Pancreas (tissue), 10 donors: ENCODE measurements at regions of chr1 and their contacts with region 1.

Region 1: DNA sequence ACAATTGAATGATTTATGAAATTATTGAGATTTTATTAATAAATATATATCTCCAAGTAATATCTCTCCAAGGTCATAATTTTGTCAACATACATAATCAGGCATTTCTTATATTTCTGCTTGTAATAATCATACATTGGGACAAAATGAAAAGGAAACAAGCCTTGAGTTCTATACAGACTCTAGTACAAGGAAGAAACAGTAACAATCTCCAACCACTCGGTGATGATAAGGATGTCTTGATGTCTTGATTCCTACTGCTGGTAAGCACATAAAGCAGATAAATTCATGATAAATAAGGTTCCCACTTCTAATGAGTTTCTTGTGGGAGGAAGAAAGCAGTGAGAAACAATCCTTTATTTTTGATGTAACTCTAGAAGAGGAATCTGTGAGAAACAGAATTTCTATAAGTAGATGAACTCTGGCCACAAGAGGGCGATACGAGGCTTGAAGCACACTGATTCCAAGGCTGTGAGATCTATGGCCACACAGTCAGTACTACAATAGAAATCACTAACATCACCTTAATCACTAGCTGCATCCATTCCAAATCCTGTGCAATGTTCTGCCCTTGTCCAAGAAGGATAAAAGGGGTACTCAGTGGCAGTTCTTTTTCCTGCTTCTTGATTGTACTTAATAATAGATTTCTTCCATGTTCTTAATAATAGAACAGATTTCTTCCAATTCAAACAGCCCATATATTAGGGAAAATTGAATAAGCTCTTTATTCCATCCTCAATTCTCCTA is 41.4 kb upstream of the LRRC8B start:
- DNase-seq: peak in 5 of 6 donors; percentile 37 to 74 (median 67)
- ATAC-seq: peak; percentile 40 to 95 (median 88)
- H3K4me3 ChIP-seq: no peak overlapping the region
- H3K27ac ChIP-seq: no peak overlapping the region
- H3K4me1 ChIP-seq: no peaks in the 10 kb centered on the region
- H3K27me3 ChIP-seq: no peaks in the 10 kb centered on the region
- CTCF ChIP-seq: peak in 3 of 4 donors; percentile 64 to 76 (median 66)

Region 2: GRCh38 chr1:89605692-89606091 is 122.5 kb after region 1 on chr1:
- intact Hi-C with region 1: loop called in 1 of 3 experiments (anchors 10 kb)
- DNase-seq: no peak
- ATAC-seq: no peak
- H3K4me3 ChIP-seq: no peak overlapping the region
- H3K27ac ChIP-seq: no peak overlapping the region
- H3K4me1 ChIP-seq: no peaks in the 10 kb centered on the region
- H3K27me3 ChIP-seq: no peaks in the 10 kb centered on the region
- CTCF ChIP-seq: no peak

Region 3: DNA sequence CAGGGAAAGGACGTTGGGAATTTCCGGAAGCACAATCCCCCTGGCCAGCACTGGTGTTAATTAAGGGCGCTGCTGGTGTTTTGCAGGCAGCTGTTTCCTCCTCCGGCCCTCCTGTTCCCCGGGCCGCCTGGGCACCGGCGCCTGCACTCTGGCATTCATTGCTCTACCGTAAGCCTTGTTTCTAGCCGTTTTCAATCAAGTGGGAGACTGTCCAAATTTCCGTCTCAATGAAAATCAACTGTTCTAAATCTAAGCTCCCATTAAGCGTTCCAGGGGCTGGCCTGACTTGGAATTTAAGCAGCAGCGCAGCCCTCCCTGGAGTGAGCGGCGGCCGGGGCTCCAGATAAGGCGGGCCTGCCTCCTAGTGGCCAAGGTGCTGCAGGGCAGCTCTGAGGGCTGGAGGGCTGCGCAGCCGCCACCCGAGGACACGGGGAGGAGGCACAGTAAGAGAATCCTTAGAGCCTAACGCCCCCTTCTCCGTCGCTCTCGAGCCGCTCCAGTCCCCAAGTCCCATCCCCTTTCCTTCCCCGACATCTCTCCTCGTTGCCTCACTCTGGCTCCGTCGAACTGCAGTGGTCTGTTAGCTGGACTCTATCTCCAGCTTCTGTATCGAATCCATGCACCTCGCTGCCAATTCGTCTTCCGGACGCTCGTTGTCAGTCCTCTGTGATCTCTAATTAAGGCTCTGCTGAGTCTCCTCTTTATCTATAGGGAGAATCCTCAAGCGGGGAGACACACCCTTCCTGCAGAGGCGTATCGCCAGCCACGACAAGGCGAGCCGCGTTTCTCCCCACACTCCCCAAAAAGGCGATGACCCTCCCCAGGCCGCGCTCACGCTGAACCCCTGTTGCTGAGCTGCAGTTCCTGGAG is 279.8 kb after region 1 on chr1:
- intact Hi-C with region 1: loop called in 1 of 3 experiments (anchors 10 kb)
- DNase-seq: peak; percentile 71 to 93 (median 83)
- ATAC-seq: peak; percentile 99
- H3K4me3 ChIP-seq: peak overlapping the region; percentile 13 to 51 (median 20)
- H3K27ac ChIP-seq: peak overlapping the region in 1 of 4 donors; percentile 52
- H3K4me1 ChIP-seq: peaks cover 0 to 5% (median 4%) of the 10 kb centered on the region in 3 donors
- H3K27me3 ChIP-seq: no peaks in the 10 kb centered on the region
- CTCF ChIP-seq: peak; percentile 89 to 99 (median 95)